Activated T-helper 1 cell treated with anti-CD3 and anti-CD28 coated beads, Interleukin-12 subunit alpha, Interleukin-12 subunit beta, Interleukin-2, Interleukin-4 antibody, amounts not matched to agents 30 ng/mL and 10 ng/mL and 1 ng/mL, durations not matched to agents 14 hours and 24 hours and 36 hours (primary cell): ENCODE measurements at regions of chr9 and their contacts with region 1.

Region 1: GRCh38 chr9:105447814-105448812 is at the start of gene FSD1L:
- DNase-seq: peak; percentile 80
- H3K4me3 Mint-ChIP-seq: peak within 1 kb of the TSS; percentile 87
- H3K27ac Mint-ChIP-seq: peak within 1 kb of the TSS; percentile 75
- H3K4me1 Mint-ChIP-seq: peaks cover 17% of the 10 kb centered on the region
- H3K27me3 Mint-ChIP-seq: peaks cover 9% of the 10 kb centered on the region
- total RNA-seq, gene FSD1L: 3.4 and 3.5 TPM in 2 replicates

Region 2: GRCh38 chr9:104968025-104968982 is 479.8 kb before region 1 on chr9:
- intact Hi-C with region 1: loop called (anchors 1 kb)
- DNase-seq: peak; percentile 84
- H3K4me3 Mint-ChIP-seq: peak overlapping the region; percentile 92
- H3K27ac Mint-ChIP-seq: peak overlapping the region; percentile 66
- H3K4me1 Mint-ChIP-seq: peaks cover 13% of the 10 kb centered on the region
- H3K27me3 Mint-ChIP-seq: peaks cover 21% of the 10 kb centered on the region

Region 3: DNA sequence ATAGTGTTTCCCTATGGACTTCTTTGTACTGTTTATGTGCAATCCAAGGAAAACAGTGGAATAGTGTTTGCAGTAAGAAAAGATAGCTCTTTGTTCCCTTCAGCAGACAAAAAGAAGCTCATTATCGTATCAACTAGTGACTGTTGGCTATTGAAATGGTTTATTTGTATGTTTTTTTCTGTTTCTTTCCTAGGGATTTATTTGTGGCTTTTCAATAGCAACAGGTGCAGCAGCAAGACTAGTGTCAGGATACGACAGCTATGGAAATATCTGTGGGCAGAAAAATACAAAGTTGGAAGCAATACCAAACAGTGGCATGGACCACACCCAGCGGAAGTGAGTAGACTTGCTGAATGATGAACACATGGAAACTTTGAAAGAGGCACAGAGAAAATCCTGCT is 138.6 kb before region 1 on chr9:
- intact Hi-C with region 1: no loop called
- DNase-seq: no peak
- H3K4me3 Mint-ChIP-seq: no peak overlapping the region
- H3K27ac Mint-ChIP-seq: no peak overlapping the region
- H3K4me1 Mint-ChIP-seq: no peaks in the 10 kb centered on the region
- H3K27me3 Mint-ChIP-seq: no peaks in the 10 kb centered on the region

Region 4: GRCh38 chr9:105405514-105406131 is 42.5 kb before region 1 on chr9:
- intact Hi-C with region 1: loop called (anchors 2 kb)
- DNase-seq: peak; percentile 61
- H3K4me3 Mint-ChIP-seq: peak overlapping the region; percentile 23
- H3K27ac Mint-ChIP-seq: peak overlapping the region; percentile 90
- H3K4me1 Mint-ChIP-seq: peaks cover 31% of the 10 kb centered on the region
- H3K27me3 Mint-ChIP-seq: peaks cover 66% of the 10 kb centered on the region

Region 5: GRCh38 chr9:105466898-105467455 is 18.9 kb after region 1 on chr9:
- intact Hi-C with region 1: no loop called
- DNase-seq: no peak
- H3K4me3 Mint-ChIP-seq: no peak overlapping the region
- H3K27ac Mint-ChIP-seq: no peak overlapping the region
- H3K4me1 Mint-ChIP-seq: no peaks in the 10 kb centered on the region
- H3K27me3 Mint-ChIP-seq: no peaks in the 10 kb centered on the region

Region 6: DNA sequence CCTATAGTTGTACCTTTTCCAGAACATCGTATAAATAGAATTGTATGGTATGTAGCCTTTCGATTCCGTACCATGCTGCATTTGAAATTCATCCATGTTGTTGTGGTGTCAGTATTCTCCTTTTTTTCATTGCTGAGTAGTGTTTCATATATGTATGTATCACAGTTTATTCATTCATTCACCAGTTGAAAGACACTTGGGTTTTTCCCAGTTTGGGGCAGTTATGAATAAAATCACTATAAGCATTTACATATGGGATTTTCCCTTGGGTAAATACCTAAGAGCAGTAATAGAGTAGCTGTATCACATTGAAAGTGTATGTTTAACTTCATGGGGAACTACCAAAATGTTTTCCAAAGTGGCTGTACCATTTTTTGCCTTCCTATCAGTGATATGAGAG is 93.7 kb after region 1 on chr9:
- intact Hi-C with region 1: loop called (anchors 5 kb)
- DNase-seq: no peak
- H3K4me3 Mint-ChIP-seq: no peak overlapping the region
- H3K27ac Mint-ChIP-seq: peak overlapping the region; percentile 36
- H3K4me1 Mint-ChIP-seq: peaks cover 7% of the 10 kb centered on the region
- H3K27me3 Mint-ChIP-seq: no peaks in the 10 kb centered on the region

Region 7: DNA sequence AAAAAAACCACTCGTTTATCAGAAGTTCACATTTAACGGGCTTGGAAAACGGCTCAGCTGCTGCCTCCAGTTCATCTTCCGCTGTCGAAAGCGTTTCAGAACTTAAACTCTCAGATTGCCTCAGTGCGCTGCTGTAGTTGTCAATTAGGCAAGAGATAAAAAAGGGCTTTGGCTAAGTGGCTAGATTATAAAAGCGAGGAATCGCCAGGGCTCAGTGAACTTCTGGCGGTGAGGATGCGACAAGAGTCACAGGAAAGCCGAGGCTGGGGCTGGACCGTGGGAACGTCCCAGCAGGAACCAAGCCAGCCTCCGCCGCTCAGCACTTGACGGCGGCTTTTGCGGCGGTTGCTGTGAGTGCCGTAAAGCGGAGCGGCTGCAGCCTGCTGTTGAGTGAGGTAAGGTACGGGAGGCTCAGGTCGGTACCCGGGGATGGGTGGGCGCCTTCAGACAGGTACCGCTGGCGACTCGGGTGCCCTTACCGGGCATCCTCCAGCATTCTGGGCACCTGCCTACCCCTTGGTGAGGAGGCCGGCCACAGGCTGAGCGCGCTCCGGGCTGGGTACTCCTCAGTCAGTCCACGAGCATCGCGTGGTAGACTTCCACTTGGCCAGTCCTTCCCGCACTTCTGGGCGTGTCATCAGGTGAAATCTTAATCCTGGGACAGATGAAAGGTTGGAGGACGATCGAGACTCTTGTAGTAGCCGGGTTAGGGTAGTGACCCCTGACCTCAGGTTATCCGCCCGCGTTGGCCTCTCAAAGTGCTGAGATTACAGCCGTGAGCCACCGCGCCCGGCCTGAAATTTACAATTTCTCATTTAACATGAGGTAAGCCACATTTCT is 109.9 kb after region 1 on chr9 and contains the start of gene FKTN:
- intact Hi-C with region 1: loop called (anchors 1 kb)
- DNase-seq: peak; percentile 76
- H3K4me3 Mint-ChIP-seq: peak within 1 kb of the TSS; percentile 94
- H3K27ac Mint-ChIP-seq: peak within 1 kb of the TSS; percentile 71
- H3K4me1 Mint-ChIP-seq: peaks cover 22% of the 10 kb centered on the region
- H3K27me3 Mint-ChIP-seq: no peaks in the 10 kb centered on the region
- total RNA-seq, gene FKTN: 12.4 and 12.6 TPM in 2 replicates